Testis (tissue), 5 donors: ENCODE measurements at regions of chr7 and their contacts with region 1.

Region 1: DNA sequence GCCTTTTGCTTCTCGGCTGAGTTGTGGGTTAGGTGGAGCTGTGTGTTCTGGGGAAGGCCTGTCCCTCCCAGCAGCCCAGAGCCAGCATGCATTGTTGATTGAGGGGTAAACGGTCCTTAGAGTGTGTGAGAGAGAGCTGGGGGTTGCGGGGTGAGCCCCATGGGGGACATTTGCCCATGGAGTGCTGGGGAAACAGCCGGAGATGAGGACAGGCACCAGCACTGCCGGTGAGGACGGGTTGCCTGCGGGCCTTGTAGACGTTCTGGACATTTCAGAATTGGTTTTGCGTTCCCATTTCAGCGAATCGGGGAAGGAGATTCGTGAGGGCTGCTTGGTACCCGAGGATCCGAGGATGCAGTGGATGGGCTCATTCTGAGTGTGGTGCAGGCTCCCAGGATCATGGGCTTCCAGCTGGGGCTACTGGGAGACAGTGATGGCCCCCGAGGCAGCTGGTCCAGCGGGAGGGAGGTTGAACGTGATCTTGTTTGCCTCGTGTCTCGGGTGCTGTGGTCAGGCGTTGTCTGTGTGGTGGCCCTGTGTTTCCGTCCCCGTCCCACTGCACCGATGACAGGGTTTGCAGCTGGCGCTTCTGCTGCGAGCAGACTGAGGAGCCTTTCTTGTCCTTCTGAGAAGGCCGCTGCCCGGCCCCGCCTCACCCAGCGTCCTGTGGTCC is 113.9 kb downstream of the CYTH3 start:
- DNase-seq: no peak
- H3K4me3 ChIP-seq: no peak overlapping the region
- H3K27ac ChIP-seq: no peak overlapping the region
- H3K4me1 ChIP-seq: peaks cover 4% of the 10 kb centered on the region
- H3K27me3 ChIP-seq: no peaks in the 10 kb centered on the region
- CTCF ChIP-seq: no peak
- POLR2A ChIP-seq: no peak

Region 2: GRCh38 chr7:6323967-6324701 is 165.6 kb after region 1 on chr7:
- intact Hi-C with region 1: loop called (anchors 10 kb)
- DNase-seq: no peak
- H3K4me3 ChIP-seq: no peak overlapping the region
- H3K27ac ChIP-seq: no peak overlapping the region
- H3K4me1 ChIP-seq: no peaks in the 10 kb centered on the region
- H3K27me3 ChIP-seq: no peaks in the 10 kb centered on the region
- CTCF ChIP-seq: no peak
- POLR2A ChIP-seq: no peak